PC-9 (cell line): ENCODE measurements at regions of chr15 and their contacts with region 1.

Region 1: DNA sequence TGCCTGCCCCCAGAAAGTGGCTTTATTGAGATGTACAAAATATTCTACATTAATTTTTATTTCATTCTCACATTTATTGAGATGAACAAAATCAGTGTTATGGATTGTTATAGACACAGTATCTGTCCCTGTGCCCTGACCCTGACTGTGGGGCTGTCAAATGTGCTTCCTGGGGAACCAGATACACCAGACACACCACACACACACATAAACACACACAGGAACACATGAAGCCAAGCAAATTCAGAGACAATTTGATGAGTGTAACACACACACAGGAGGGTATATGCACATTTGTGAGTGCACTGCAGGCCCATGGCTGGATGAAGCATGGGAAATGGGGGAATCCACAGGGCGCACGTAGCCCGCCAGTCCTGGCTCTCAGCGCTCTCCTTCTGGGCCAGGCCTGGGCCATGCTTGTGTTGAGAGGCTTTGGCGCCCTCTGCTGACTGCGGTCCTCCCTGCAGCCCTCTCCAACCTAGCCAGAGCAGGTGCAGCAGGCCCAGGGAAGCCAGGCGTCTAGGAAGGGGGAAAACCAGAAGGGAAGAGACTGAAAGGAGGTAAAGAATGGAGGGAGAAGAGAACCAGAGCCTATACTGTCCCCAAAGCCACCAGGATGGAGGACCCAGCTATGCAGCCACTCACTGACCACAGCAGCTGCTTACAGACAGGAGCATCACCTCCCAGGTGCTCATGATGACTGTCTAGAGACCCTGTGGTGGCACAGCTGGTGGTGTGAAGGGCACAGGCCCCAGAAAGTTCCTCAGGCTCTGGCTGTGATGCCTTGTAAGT is 18.0 kb upstream of the LOXL1 start:
- DNase-seq: peak; percentile 52 to 68
- H3K4me3 ChIP-seq: no peak overlapping the region
- H3K27ac ChIP-seq: no peak overlapping the region
- H3K4me1 ChIP-seq: no peaks in the 10 kb centered on the region
- H3K27me3 ChIP-seq: no peaks in the 10 kb centered on the region
- CTCF ChIP-seq: peak; percentile 82

Region 2: DNA sequence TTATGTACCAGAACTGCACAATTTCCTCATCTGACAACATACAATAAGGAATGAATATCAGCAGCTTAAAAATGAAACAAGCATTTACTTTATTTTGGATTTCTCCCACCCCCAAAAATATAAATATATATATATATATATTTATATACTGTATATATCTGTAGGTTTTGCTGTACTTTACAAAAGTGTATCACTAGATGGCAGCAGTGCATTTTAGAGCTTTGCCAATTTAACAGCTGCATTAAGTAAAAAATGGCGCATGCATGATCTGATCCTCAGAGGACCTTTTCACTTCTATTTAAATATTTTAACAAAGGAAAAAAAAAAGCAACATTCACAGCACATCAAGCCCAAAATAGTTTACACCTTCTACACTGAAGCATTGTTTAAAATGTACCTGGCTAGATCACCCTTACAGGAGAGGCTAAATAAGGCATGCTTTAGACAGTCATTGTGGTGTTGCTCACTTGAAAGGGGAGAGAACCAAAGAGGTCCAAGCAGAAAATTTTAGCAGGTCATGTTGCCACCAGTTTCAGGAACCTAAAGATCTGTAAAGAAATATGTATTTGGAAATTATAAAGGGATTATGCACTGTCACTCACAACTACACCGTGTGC is 347.6 kb before region 1 on chr15:
- CTCF ChIA-PET with region 1: no interaction called
- POLR2A ChIA-PET with region 1: no interaction called
- intact Hi-C with region 1: loop called (anchors 5 kb)
- DNase-seq: peak; percentile 8 to 51
- H3K4me3 ChIP-seq: no peak overlapping the region
- H3K27ac ChIP-seq: no peak overlapping the region
- H3K4me1 ChIP-seq: peaks cover 14% of the 10 kb centered on the region
- H3K27me3 ChIP-seq: no peaks in the 10 kb centered on the region
- CTCF ChIP-seq: peak; percentile 67

Region 3: DNA sequence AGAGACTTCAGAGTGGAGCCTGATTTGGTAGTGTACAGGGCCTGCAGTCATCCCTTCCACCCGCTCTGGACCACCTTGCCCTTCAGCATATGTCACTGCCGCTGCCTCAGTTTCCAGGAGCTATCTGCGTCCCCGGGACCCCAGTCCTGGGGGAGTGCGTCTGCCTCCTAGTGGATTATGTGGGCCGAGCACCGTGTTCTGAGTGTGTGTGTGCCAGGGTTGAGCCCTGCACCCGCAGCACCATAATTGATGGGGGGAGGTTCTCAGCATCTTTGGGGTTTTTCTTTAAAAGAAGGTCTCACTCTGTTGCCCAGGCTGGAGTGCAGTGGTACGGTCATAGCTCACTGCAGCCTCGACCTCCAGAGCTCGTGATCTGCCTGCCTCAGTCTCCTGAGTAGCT is 190.4 kb before region 1 on chr15:
- CTCF ChIA-PET with region 1: interaction called, 5 read pairs
- POLR2A ChIA-PET with region 1: no interaction called
- intact Hi-C with region 1: loop called (anchors 10 kb)
- DNase-seq: no peak
- H3K4me3 ChIP-seq: no peak overlapping the region
- H3K27ac ChIP-seq: no peak overlapping the region
- H3K4me1 ChIP-seq: no peaks in the 10 kb centered on the region
- H3K27me3 ChIP-seq: peaks cover 18% of the 10 kb centered on the region
- CTCF ChIP-seq: no peak

Region 4: DNA sequence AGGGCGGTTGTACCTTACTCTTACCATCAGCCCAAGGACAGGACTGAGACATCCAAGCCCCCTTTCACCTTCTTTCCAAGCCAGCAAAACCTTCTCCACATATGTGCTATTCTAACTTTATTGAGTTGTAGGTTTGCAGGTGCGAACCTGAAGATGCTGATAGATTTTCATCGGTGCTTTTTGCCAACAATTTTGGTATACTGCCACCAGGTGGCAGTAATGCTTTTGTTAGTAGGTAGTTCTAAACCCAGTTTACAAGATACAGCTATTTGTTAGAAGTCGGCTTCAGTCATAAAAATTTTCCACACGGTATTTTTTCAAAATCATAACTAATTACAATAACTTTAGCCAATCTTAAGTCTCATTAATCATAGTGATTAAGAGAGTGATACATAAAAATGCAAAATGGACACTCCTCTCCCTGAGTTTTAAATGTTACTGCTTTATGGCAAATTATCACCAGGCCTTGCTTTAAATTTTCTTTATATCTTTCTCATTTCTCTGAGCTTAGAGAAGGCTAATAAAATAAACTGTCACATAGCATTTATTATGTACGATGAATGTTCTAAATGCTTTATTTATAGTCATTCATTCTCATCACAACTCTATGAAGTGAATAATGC is 34.2 kb before region 1 on chr15:
- CTCF ChIA-PET with region 1: interaction called, 10 read pairs
- POLR2A ChIA-PET with region 1: no interaction called
- intact Hi-C with region 1: no loop called
- DNase-seq: peak; percentile 17 to 60
- H3K4me3 ChIP-seq: no peak overlapping the region
- H3K27ac ChIP-seq: no peak overlapping the region
- H3K4me1 ChIP-seq: no peaks in the 10 kb centered on the region
- H3K27me3 ChIP-seq: peaks cover 46% of the 10 kb centered on the region
- CTCF ChIP-seq: peak; percentile 86